ENCODE measurements at regions of chr6 and their contacts with region 1.

Region 1: DNA sequence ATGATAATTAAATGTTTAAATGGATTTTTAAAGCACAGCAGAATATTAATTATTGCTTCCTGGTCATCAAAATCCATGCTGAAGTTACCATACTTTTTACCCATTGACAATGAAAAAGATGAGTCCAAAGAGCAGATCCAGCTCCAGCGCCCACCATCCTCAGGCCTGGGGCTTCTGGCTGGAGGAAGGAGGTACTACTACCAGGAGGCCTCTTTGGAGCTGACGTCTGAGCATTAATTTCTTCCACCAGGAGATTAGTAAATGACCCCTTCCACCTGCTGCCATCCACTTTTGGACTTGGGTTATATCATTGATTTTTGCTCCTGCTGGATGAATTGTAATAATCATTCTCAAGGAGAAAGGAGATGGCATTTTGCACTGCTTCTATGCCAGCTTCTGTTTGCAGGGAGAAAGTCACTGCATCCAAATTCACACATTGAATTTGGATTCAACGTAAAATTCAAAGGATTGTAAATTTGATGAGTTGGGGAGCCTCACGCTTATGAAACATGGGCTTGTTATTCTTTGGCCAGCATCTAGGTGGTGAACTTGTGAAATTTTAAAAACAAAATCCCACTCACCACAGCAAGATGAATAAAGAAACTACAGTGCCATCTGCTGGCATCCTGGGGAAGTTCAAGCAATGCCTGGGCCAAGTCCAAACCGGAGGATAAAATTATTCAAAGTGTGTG is 121.8 kb downstream of the SASH1 start:
- DNase-seq: peak; percentile 52
- ATAC-seq: peak; percentile 68 to 80

Region 2: DNA sequence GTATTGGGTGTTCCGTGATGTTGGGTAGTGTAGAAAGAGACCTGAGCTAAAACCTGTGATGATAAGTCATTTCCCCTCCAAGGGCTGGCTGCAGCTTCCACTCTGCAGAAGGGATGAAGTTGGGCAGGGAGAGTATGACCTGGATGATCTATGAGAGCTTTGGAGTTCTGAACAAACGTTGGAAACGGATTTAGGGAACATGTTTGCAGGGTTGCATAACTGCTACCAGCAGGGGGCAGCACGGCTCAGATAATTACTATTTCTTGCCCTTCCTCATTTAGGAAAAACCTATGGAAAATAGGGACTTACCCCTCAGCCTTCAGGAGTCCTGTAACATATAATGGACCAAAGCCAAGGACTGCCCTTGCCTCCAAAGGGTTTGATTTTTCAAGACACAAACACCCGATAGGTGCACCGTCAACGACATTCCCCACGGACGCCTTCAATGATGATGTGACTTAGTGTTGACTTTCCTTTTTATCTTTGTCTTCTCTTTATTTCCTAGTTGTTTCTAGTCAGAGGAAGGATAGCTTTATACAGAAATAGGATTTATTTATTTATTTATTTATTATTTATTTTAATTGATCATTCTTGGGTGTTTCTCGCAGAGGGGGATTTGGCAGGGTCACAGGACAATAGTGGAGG is 286.8 kb before region 1 on chr6:
- intact Hi-C with region 1: loop called (anchors 2 to 5 kb)
- DNase-seq: peak; percentile 75
- ATAC-seq: peak in 1 of 2 donors; percentile 51

Region 3: GRCh38 chr6:148342357-148343046 is 122.0 kb before region 1 on chr6 and contains the start of gene SASH1:
- intact Hi-C with region 1: loop called in 1 of 2 experiments (anchors 5 kb)
- DNase-seq: peak; percentile 72
- ATAC-seq: peak; percentile 81 to 82
- total RNA-seq, gene SASH1: 33.4 to 36.2 TPM

Region 4: GRCh38 chr6:148423601-148424270 is 40.7 kb before region 1 on chr6:
- intact Hi-C with region 1: loop called in 1 of 2 experiments (anchors 2 kb)
- DNase-seq: no peak
- ATAC-seq: peak in 1 of 2 donors; percentile 39

Region 5: GRCh38 chr6:148501178-148501590 is 36.7 kb after region 1 on chr6:
- intact Hi-C with region 1: no loop called
- DNase-seq: peak; percentile 58
- ATAC-seq: peak; percentile 67 to 72

Measured in left cardiac atrium (tissue), 4 donors.